Psoas muscle (tissue), 8 donors: ENCODE measurements at regions of chr15 and their contacts with region 1.

Region 1: DNA sequence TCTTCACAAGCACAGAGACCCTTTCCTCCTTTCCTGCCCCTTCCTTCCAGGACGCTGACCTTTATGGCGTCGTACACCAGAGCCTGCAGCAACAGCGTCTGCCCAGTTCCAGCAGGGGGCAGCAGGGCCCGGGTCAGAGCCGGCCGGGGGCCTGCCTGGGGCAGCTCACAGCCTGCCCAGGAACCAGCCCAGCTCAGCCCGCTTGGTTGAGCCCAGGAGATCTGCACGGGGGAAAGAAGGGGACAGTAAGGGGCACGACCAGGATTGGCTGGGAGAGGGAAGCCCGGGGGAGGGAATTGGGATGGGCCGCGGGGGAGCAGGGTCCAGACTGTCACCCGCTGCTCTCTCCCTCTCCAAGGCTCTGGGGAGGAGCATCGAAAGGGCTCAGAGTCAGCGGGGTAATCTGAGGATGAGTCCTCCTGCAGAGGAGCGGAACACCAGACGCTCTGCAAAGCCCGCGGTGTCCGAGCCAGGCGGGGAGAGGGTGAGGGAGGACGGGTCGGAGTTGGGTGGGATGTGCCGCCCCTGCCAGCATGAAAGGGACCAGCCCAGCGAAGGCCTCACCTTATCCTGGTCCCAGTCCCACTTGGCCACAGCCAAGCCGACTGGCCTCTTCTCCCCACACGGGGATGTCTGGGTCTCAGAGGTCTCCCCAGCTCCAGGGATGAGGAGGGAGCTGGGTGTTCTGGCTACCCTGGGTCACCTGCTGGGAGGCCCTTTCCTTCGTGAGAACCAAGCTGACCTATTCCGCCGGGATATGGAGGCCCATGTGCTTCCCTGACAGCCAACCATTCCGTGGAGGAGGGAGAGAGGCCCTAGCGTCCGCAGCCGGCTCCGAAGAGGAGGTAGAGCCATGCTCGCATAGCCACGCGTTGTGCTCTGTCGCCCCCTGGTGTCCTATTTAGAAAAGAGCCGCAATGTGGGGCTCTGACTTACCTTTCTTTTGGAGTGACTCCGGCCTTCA is 7.4 kb upstream of the IGDCC3 start:
- DNase-seq: peak; percentile 80 to 90
- ATAC-seq: peak; percentile 90 to 98 (median 94)
- H3K4me3 ChIP-seq: peak overlapping the region; percentile 48
- H3K27ac ChIP-seq: peak overlapping the region; percentile 8
- H3K4me1 ChIP-seq: peaks cover 4% of the 10 kb centered on the region
- H3K27me3 ChIP-seq: no peaks in the 10 kb centered on the region
- CTCF ChIP-seq: peak; percentile 87

Region 2: GRCh38 chr15:65192016-65192415 is 193.2 kb before region 1 on chr15:
- intact Hi-C with region 1: loop called in 1 of 2 experiments (anchors 10 kb)
- DNase-seq: no peak
- ATAC-seq: peak in 1 of 4 donors; percentile 22
- H3K4me3 ChIP-seq: no peak overlapping the region
- H3K27ac ChIP-seq: no peak overlapping the region
- H3K4me1 ChIP-seq: no peaks in the 10 kb centered on the region
- H3K27me3 ChIP-seq: no peaks in the 10 kb centered on the region
- CTCF ChIP-seq: no peak

Region 3: DNA sequence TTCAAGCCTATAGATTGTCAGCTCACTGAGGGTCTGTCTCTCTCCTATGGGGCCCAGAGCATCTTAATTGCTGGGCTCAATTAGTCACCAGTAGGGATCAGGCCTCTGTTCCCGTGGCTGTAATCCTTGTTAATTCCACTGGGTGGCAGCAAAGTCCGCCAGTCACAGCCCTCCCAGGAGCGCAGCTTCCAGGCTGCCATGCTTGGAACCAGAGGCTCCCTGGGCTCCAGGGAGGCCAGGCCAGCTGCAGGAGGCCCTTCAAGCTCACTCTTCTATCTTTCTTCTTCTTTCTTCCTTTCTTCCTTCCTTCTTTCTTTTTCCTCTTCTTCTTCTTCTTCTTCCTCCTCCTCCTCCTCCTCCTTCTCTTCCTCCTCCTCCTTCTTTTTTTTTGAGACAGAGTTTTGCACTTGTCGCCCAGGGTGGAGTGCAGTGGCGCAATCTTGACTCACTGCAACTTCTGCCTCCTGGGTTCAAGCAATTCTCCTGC is 66.3 kb before region 1 on chr15:
- intact Hi-C with region 1: loop called (anchors 1 kb)
- DNase-seq: peak; percentile 78 to 86
- ATAC-seq: peak; percentile 92 to 99 (median 94)
- H3K4me3 ChIP-seq: no peak overlapping the region
- H3K27ac ChIP-seq: no peak overlapping the region
- H3K4me1 ChIP-seq: peaks cover 8% of the 10 kb centered on the region
- H3K27me3 ChIP-seq: no peaks in the 10 kb centered on the region
- CTCF ChIP-seq: peak; percentile 96

Region 4: DNA sequence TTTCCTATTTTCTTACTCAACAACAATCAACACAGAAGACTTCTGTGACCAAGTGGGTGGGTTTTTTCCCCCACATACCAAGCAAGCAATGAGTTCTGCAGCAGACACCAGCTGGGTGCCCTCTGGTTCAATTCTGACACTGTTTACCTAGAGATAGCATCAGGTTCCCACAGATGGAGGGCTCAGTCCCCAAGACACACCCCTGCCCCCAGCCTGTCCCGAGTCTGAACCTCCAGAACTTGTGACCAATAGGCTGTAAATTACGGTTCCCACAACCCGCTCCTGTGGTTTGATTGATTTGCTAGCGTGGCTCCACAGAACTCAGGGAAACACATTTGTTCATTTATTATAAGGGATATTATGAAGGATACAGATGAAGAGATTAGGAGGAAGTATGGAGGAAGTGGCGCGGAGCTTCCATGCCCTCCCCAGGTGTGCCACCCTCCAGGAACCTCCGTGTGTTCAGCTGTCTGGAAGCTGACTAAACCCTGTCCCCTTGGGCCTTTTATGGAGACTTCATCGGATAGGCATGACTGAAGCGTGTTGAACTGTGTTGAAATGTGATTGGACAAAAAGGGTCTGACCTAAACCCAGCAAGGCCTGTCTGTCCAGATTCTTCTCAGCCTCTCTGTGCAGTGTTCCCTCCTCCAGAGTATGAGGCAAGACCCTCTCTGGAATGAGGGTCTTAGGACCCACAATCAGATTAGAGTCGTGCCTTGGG is 176.6 kb after region 1 on chr15:
- intact Hi-C with region 1: no loop called
- DNase-seq: no peak
- ATAC-seq: no peak
- H3K4me3 ChIP-seq: no peak overlapping the region
- H3K27ac ChIP-seq: no peak overlapping the region
- H3K4me1 ChIP-seq: no peaks in the 10 kb centered on the region
- H3K27me3 ChIP-seq: no peaks in the 10 kb centered on the region
- CTCF ChIP-seq: no peak